ENCODE measurements at regions of chr7 and their contacts with region 1.

Region 1: DNA sequence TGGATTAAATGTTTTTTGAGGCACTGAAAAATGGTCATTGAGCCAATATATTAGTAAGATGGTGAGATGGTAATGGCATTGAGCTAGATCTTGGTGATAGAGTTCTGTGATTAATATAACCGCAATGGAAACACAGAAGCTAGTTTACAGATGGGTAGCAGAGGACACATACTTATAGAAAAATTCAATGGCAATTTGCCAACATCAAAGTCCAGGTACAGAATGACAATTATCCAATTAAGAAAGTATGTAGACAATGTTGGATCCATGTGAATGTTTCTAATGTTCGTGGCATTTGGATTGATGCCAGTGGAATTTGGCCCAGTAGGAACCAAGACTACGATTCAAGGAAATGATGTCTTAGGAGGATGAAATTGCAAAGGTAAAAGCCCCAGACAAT is 187.8 kb downstream of the GNAT3 start:
- DNase-seq: peak; percentile 94
- ATAC-seq: peak; percentile 75
- H3K4me3 ChIP-seq: no peak overlapping the region
- H3K27ac ChIP-seq: no peak overlapping the region
- H3K4me1 ChIP-seq: peaks cover 16% of the 10 kb centered on the region
- H3K27me3 ChIP-seq: no peaks in the 10 kb centered on the region
- CTCF ChIP-seq: no peak

Region 2: GRCh38 chr7:80346704-80347103 is 22.7 kb after region 1 on chr7:
- CTCF ChIA-PET with region 1: no interaction called
- POLR2A ChIA-PET with region 1: interaction called, 12 read pairs
- intact Hi-C with region 1: no loop called
- DNase-seq: peak; percentile 88
- ATAC-seq: peak; percentile 98
- H3K4me3 ChIP-seq: no peak overlapping the region
- H3K27ac ChIP-seq: peak overlapping the region; percentile 80
- H3K4me1 ChIP-seq: peaks cover 25% of the 10 kb centered on the region
- H3K27me3 ChIP-seq: no peaks in the 10 kb centered on the region
- CTCF ChIP-seq: no peak